ENCODE measurements at regions of chr9 and their contacts with region 1.

Region 1: DNA sequence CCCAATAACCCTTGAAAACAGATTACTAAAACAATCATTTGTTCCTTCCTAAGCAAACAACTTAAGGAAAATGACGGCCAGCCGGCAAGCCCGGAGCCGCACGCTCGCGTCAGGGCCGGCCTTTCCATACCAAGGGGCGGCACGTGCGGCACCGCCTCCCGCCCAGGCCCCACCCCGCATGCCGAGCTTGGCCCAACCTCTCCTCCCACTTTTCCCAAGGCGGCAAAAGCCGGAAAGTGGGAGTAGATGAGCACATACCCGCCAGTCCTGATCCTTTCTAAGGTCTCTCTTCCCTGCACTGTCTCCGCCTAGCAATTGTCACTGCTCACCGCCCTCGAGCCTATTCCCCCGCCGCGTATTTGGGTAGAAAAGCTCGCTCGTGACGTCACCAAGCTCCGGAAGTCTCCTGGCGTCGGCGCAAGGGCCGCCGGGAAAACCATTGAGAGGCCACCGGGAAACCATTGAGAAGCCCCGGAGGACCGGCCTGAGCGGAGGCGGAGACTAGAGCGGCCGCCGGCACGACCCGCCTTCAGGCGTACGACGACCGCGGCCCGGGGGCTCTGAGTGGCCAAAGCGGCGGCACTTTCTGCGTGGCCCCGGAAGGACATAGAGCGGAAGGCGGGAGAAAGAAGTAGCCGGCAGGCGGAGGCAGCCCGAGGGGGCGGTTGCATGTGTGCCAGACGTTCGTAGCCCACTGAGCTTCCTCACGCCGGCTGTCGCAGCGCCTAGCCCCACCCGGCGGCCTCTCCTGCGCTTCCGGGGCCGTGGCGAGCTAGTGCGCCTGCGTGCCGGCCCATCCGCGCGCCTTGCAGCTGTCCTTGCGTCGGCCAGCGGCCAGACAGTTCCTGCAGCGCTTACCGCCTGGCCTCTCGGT is at the starts of genes NCBP1 and TSTD2:
- DNase-seq: peak; percentile 93
- ATAC-seq: peak; percentile 92
- H3K4me3 Mint-ChIP-seq: peak within 1 kb of the TSS; percentile 100
- H3K27ac Mint-ChIP-seq: peak within 1 kb of the TSS; percentile 99
- H3K4me1 Mint-ChIP-seq: peaks cover 47% of the 10 kb centered on the region
- H3K27me3 Mint-ChIP-seq: no peaks in the 10 kb centered on the region
- CTCF ChIP-seq: no peak
- total RNA-seq, gene NCBP1: 31.3 and 36.3 TPM in 2 replicates
- total RNA-seq, gene TSTD2: 18.0 and 21.6 TPM in 2 replicates

Region 2: GRCh38 chr9:96686548-96687335 is 946.5 kb before region 1 on chr9:
- CTCF ChIA-PET with region 1: no interaction called
- POLR2A ChIA-PET with region 1: no interaction called
- intact Hi-C with region 1: loop called (anchors 5 kb)
- DNase-seq: peak; percentile 78
- ATAC-seq: peak; percentile 97
- H3K4me3 Mint-ChIP-seq: peak overlapping the region; percentile 89
- H3K27ac Mint-ChIP-seq: peak overlapping the region; percentile 79
- H3K4me1 Mint-ChIP-seq: peaks cover 10% of the 10 kb centered on the region
- H3K27me3 Mint-ChIP-seq: no peaks in the 10 kb centered on the region
- CTCF ChIP-seq: no peak

Region 3: GRCh38 chr9:96854073-96854876 is 778.9 kb before region 1 on chr9 and contains the start of gene ZNF782:
- CTCF ChIA-PET with region 1: no interaction called
- POLR2A ChIA-PET with region 1: interaction called, 10 read pairs
- intact Hi-C with region 1: loop called (anchors 1 kb)
- DNase-seq: peak; percentile 83
- ATAC-seq: peak; percentile 95
- H3K4me3 Mint-ChIP-seq: peak within 1 kb of the TSS; percentile 100
- H3K27ac Mint-ChIP-seq: peak within 1 kb of the TSS; percentile 98
- H3K4me1 Mint-ChIP-seq: peaks cover 40% of the 10 kb centered on the region
- H3K27me3 Mint-ChIP-seq: peaks cover 9% of the 10 kb centered on the region
- CTCF ChIP-seq: no peak
- total RNA-seq, gene ZNF782: 7.7 and 8.0 TPM in 2 replicates

Region 4: DNA sequence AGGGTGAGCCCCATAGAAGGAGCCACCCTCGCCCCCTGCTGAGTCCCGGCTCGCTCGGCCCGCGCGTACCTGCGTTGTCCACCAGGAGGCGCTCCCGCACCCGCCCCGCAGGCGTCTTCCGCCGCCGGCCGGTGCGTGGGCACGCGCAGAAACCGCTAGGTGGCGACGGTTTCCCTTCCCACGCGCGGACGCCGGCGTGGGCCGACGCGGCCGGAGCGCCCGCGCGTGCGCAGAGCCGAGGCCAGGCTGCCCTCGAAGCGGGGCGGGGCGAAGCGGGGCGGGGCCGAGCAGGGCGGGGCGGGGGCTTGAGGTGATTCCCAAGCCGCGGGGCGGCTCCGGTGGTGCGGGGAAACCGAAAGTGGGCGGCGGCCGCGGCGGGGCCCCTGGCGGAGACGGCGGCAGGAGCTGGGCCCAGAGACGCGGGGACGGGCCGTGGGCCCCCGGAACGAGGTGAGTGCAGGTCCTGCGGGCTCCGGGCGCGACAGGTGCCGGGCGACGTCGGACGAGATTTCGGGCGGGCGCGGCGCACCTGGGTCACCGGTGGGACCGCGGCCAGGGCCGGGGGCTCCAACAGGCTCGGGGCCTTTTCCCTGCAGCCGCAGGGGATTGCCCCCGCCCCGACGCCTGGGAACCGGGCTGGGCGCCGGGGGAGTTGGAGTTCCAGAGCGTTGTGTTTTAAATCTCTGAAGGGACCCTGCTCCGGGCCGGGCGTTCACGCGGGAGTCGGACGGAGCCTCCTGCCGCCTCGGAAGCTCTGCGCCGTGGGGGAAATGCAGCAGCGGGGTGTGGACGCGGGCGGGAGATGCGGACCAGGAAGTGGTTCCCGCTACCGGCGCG is 221.2 kb before region 1 on chr9 and contains the start of gene TDRD7:
- CTCF ChIA-PET with region 1: interaction called, 8 read pairs
- POLR2A ChIA-PET with region 1: interaction called, 10 read pairs
- intact Hi-C with region 1: loop called (anchors 1 kb)
- DNase-seq: peak; percentile 94
- ATAC-seq: peak; percentile 90
- H3K4me3 Mint-ChIP-seq: peak within 1 kb of the TSS; percentile 87
- H3K27ac Mint-ChIP-seq: peak within 1 kb of the TSS; percentile 78
- H3K4me1 Mint-ChIP-seq: peaks cover 38% of the 10 kb centered on the region
- H3K27me3 Mint-ChIP-seq: peaks cover 5% of the 10 kb centered on the region
- CTCF ChIP-seq: peak; percentile 43
- total RNA-seq, gene TDRD7: 13.7 and 14.7 TPM in 2 replicates

Region 5: GRCh38 chr9:97696803-97697601 is 63.8 kb after region 1 on chr9 and contains the start of gene XPA:
- CTCF ChIA-PET with region 1: no interaction called
- POLR2A ChIA-PET with region 1: interaction called, 31 read pairs
- intact Hi-C with region 1: loop called (anchors 1 kb)
- DNase-seq: peak; percentile 96
- ATAC-seq: peak; percentile 93
- H3K4me3 Mint-ChIP-seq: peak within 1 kb of the TSS; percentile 90
- H3K27ac Mint-ChIP-seq: peak within 1 kb of the TSS; percentile 94
- H3K4me1 Mint-ChIP-seq: peaks cover 60% of the 10 kb centered on the region
- H3K27me3 Mint-ChIP-seq: peaks cover 5% of the 10 kb centered on the region
- CTCF ChIP-seq: no peak
- total RNA-seq, gene XPA: 14.4 and 18.1 TPM in 2 replicates

Region 6: DNA sequence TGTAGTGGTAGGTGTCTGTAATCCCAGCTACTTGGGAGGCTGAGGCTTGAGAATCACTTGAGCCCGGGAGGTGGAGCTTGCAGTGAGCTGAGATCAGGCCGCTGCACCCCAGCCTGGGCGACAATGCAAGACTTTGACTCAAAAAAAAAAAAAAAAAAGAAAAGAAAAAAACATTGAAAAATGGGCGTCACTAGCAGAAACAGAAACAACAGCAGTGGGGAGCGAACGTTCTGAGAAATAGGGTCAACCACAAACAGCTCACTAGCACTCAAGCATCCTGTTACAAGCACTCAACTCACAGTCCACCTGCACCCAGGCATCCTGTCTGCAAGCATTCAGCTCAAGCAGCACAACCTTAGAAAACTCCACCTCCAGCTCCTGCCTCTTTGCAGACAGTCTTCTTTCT is 468.6 kb after region 1 on chr9:
- CTCF ChIA-PET with region 1: no interaction called
- POLR2A ChIA-PET with region 1: no interaction called
- intact Hi-C with region 1: loop called (anchors 10 kb)
- DNase-seq: peak; percentile 32
- ATAC-seq: peak; percentile 95
- H3K4me3 Mint-ChIP-seq: peak overlapping the region; percentile 42
- H3K27ac Mint-ChIP-seq: peak overlapping the region; percentile 84
- H3K4me1 Mint-ChIP-seq: peaks cover 87% of the 10 kb centered on the region
- H3K27me3 Mint-ChIP-seq: no peaks in the 10 kb centered on the region
- CTCF ChIP-seq: no peak

Region 7: DNA sequence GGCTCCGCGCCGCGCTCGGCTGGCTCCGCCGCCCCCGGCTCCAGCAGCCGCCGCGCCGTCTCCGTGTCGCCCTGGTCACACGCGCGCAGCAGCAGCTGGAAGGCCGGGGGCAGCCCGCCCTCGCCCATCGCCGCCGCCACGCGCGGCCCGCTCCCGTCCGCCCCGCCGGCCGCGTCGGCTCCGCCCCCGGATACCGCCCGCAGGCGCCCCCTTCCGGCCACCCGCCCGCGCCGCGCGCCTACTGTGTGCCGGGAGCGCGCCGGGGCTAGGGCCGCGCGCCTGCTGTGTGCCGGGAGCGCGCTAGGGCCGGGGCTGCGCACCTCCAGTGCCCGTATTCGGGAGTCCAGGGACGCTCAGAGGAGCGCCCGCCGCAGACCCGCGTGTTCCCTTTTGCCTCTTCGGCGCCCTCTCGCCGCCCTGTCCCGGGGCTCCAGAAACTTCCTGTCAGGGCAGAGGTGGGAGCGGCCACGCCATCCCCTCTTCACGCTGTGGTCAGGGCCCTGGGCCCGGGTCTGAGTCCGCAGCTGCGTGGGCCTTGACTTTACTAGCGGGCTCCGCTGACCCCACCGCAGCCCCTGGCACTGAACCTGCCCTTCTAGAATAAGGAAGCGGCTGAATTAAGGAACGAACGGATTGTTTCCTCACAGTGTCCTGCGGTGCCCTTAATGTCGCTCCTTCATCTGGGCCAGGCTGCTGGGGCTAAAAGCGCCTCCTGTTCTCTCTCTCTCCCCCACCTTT is 1163.3 kb after region 1 on chr9 and contains the start of gene ANKS6:
- CTCF ChIA-PET with region 1: no interaction called
- POLR2A ChIA-PET with region 1: no interaction called
- intact Hi-C with region 1: loop called (anchors 10 kb)
- DNase-seq: peak; percentile 91
- ATAC-seq: peak; percentile 94
- H3K4me3 Mint-ChIP-seq: peak within 1 kb of the TSS; percentile 87
- H3K27ac Mint-ChIP-seq: peak within 1 kb of the TSS; percentile 47
- H3K4me1 Mint-ChIP-seq: peaks cover 16% of the 10 kb centered on the region
- H3K27me3 Mint-ChIP-seq: peaks cover 1% of the 10 kb centered on the region
- CTCF ChIP-seq: no peak
- total RNA-seq, gene ANKS6: 12.1 and 14.8 TPM in 2 replicates

Measured in activated B cell treated with CpG ODN at 0.5 μM for 24 hours (primary cell).